Common myeloid progenitor, CD34-positive (primary cell): ENCODE measurements at regions of chr6 and their contacts with region 1.

Region 1: DNA sequence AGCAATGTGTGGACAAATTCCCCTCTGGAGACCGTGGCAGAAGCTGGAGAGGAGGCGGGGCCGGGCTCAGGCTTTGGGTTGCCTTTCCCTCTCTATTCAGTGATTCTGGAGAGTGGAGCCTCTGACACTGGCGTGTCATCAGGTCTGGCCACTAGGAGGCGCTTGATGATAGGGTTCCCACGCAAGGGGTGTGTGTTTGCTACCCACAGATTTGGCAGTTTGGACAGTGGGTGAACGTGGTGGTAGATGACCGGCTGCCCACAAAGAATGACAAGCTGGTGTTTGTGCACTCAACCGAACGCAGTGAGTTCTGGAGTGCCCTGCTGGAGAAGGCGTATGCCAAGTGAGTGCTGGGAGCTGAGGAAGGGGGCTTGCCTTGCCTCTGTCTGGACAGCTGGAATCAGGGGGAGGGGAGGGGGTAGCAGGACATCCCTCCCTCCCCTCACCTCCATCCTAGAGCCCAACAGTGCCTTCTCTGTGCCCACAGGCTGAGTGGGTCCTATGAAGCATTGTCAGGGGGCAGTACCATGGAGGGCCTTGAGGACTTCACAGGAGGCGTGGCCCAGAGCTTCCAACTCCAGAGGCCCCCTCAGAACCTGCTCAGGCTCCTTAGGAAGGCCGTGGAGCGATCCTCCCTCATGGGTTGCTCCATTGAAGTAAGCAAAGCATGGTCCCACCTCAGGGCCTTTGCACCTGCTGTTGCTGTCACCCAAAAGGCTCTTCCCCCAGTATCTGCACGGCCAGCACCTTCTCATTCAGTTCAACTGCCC is 14.3 kb downstream of the CAPN11 start:
- DNase-seq: peak; percentile 74 to 86 (median 83)
- H3K4me3 ChIP-seq: no peak overlapping the region
- H3K27ac ChIP-seq: no peak overlapping the region
- H3K4me1 ChIP-seq: peaks cover 0 to 25% (median 23%) of the 10 kb centered on the region in 4 experiments
- H3K27me3 ChIP-seq: no peaks in the 10 kb centered on the region

Region 2: GRCh38 chr6:44161997-44162338 is 10.9 kb before region 1 on chr6:
- CTCF ChIA-PET with region 1: interaction called, 19 read pairs
- POLR2A ChIA-PET with region 1: no interaction called
- DNase-seq: no peak
- H3K4me3 ChIP-seq: no peak overlapping the region
- H3K27ac ChIP-seq: no peak overlapping the region
- H3K4me1 ChIP-seq: peaks cover 0 to 17% (median 11%) of the 10 kb centered on the region in 4 experiments
- H3K27me3 ChIP-seq: no peaks in the 10 kb centered on the region

Region 3: DNA sequence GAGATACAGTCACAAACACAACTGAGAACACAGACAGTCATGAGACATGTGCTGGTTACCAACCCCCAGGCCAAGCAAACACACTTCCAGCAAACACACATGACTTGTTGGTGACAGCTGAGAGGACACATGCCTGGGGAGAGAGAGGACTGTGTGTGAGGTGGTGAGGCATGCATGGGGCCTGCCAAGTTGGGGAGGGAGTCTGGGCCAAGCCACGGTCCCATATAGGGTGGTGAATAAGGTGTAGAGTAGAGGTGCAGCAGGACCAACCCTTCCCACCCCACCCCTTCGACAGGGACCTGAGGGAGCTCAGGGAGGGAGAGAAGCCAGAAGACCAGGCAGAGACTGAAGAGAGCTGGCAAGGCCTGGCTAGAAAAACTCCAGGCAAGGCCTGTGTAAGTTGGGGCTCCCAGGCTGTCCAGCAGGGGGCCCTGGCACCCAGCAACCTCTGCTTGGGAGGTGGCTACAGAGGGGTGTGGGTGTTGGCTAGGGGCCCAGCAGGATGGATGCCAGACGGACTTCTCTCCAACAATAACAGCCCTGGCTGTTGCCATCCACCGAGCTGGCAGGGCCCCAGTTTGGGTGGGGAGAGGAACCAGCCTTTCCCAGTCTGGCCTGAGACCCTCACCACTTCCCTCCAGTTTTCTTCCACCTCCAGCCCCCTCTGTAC is 48.5 kb after region 1 on chr6:
- CTCF ChIA-PET with region 1: interaction called, 10 read pairs
- POLR2A ChIA-PET with region 1: no interaction called
- DNase-seq: peak; percentile 89 to 93 (median 93)
- H3K4me3 ChIP-seq: peak overlapping the region in 2 of 7 experiments; percentile 11
- H3K27ac ChIP-seq: no peak overlapping the region
- H3K4me1 ChIP-seq: peaks cover 0 to 89% (median 83%) of the 10 kb centered on the region in 4 experiments
- H3K27me3 ChIP-seq: no peaks in the 10 kb centered on the region

Region 4: DNA sequence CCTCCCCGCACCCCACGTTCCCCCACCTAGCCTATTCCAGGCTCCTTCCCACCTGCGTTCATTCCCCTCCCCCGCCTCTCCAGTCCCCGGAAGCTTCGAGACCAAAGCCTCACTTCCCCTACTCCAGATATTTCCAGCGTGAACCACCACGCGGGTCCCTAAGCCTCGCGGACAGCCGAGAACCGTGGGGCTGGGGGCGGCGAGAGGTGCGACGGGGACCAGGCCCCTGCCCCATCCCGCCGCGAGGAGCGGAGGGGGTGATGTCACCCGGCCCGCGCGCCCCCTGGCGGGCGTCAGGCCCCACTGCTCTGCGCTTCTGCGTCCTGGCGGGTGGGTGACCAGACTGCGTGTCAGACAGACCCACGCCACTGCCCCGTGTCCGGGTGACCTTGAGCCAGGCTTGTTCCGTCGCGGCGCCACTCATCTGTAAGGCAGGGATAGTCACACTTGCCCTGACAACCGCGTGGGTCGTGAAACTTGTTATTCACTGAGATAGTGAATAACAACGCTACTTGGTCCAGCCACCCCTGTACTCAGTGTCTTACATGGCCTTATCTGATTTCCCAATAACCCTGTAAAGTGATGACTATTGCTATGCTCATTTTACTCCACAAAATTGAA is 65.0 kb after region 1 on chr6:
- CTCF ChIA-PET with region 1: interaction called, 65 read pairs
- POLR2A ChIA-PET with region 1: no interaction called
- DNase-seq: peak; percentile 64 to 87 (median 84)
- H3K4me3 ChIP-seq: peak overlapping the region; percentile 39 to 82 (median 64)
- H3K27ac ChIP-seq: peak overlapping the region in 1 of 2 experiments; percentile 86
- H3K4me1 ChIP-seq: peaks cover 0 to 38% (median 32%) of the 10 kb centered on the region in 4 experiments
- H3K27me3 ChIP-seq: no peaks in the 10 kb centered on the region

Region 5: DNA sequence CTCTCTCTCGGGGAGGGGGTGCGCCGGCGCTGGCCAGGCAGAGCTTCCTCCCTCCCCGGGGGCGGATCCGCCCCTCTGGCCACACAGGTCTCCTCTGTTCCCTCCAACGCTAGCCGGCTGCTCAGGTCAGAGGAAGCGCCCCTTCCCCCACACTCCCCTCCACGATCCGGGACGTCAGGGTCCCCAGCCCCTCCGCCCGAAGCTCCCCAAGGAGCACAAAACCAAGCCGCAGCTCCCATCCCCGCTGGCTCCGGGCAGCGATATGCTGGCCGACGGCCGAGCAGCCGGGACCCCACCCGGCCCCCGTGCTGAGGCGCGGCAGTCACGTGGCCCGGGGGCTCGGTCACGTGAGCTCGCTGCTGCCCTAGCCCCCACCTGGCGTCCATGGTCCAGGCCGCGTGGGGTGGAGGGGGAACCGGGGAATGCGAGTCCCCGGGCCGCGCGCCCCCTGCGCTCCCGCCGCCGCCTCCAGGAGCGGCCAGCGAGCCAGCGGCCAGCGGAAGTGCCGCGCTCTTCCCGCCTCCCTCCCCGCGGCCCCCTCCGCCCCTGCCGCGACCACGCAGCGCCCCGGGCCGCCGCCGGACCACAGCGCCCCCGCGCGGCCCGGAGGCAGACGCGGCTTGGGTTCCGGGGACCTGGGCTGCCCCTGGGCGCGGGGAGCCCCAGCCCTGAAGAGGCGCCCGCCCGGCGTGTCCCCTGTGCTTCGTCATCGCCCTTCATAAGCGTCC is 84.3 kb after region 1 on chr6 and contains the start of gene SLC35B2:
- CTCF ChIA-PET with region 1: interaction called, 19 read pairs
- POLR2A ChIA-PET with region 1: interaction called, 4 read pairs
- DNase-seq: peak; percentile 50 to 77 (median 69)
- H3K4me3 ChIP-seq: peak within 1 kb of the TSS; percentile 63 to 89 (median 83)
- H3K27ac ChIP-seq: peak within 1 kb of the TSS; percentile 46 to 73
- H3K4me1 ChIP-seq: peaks cover 4 to 42% (median 29%) of the 10 kb centered on the region in 4 experiments
- H3K27me3 ChIP-seq: no peaks in the 10 kb centered on the region